GM12878 (cell line): ENCODE measurements at regions of chr1 and their contacts with region 1.

Region 1: DNA sequence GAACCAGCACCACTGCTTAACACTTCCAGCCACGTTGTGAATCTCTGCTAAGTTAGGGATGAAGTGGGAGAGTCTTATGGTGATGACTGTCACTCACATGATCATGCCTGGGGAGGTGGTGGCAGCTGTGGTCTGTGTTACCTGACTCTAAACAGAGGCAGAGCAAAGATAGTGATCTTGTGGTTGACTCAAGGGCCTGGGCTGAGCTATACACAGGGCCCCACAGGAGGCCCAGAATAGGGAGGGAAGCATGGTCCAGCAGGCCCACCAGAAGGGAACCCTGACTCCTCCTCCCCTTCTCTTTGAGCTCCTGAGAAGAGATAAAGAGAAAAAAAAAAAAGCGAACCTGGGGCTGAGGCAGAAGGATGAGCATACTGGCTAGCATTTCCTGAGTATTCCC is 55.0 kb downstream of the PLXNA2 start:
- DNase-seq: peak; percentile 46
- ATAC-seq: no peak
- H3K4me3 ChIP-seq: no peak overlapping the region
- H3K27ac ChIP-seq: peak overlapping the region; percentile 92
- H3K4me1 ChIP-seq: peaks cover 44% of the 10 kb centered on the region
- H3K27me3 ChIP-seq: no peaks in the 10 kb centered on the region
- CTCF ChIP-seq: no peak
- EP300 ChIP-seq: no peak
- POLR2A ChIP-seq: no peak
- RAD21 ChIP-seq: no peak

Region 2: GRCh38 chr1:207654320-207654719 is 534.9 kb before region 1 on chr1:
- CTCF ChIA-PET with region 1: no interaction called
- POLR2A ChIA-PET with region 1: no interaction called
- RAD21 ChIA-PET with region 1: no interaction called
- SMC1A ChIA-PET with region 1: no interaction called
- in situ Hi-C with region 1: no loop called
- intact Hi-C with region 1: no loop called
- DNase-seq: no peak
- ATAC-seq: no peak
- H3K4me3 ChIP-seq: no peak overlapping the region
- H3K27ac ChIP-seq: no peak overlapping the region
- H3K4me1 ChIP-seq: no peaks in the 10 kb centered on the region
- H3K27me3 ChIP-seq: no peaks in the 10 kb centered on the region
- CTCF ChIP-seq: no peak
- EP300 ChIP-seq: no peak
- POLR2A ChIP-seq: no peak
- RAD21 ChIP-seq: no peak

Region 3: DNA sequence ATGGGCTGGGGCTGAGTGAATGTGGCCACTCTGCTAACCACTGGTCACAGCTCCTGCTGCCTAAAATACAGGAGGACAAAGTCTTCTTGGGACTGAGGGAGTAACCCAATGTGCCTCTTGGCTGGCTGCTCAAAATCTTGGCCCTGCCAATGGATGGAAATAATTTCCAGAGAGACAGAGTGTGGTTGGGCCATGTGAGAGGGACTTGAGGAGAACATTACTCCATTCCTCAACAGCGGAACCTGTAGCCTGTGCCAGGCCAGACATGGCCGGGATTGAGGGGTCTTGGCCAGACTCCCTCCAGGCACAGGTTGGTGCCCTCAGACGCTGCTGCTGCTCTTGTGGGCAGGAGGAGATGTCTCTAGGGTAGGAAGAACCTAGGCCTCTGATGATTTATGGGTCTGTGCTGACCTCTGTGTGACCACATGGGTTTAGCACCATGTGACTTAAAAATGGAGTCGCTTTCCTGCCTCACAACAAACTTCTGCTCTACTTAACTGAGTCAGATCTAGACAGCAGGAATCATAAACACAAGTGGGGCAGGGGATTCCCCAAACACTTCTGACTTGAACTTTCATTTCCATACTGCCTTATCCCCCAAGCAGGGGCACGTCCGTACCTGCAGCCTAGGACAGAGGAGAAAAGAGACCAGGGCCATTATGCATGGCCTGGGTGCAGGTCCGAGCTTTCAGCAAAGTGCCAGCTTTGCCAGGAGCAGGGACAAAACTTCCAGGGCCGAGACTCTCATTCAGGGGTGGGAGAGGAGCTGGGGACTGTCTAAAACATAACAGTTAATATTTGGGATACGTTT is 357.5 kb before region 1 on chr1:
- CTCF ChIA-PET with region 1: no interaction called
- POLR2A ChIA-PET with region 1: no interaction called
- RAD21 ChIA-PET with region 1: no interaction called
- SMC1A ChIA-PET with region 1: no interaction called
- in situ Hi-C with region 1: no loop called
- intact Hi-C with region 1: no loop called
- DNase-seq: peak; percentile 94
- ATAC-seq: peak; percentile 90
- H3K4me3 ChIP-seq: peak overlapping the region; percentile 50; the same call in 1 of the 2 replicates
- H3K27ac ChIP-seq: peak overlapping the region; percentile 80
- H3K4me1 ChIP-seq: peaks cover 44% of the 10 kb centered on the region
- H3K27me3 ChIP-seq: no peaks in the 10 kb centered on the region
- CTCF ChIP-seq: no peak
- EP300 ChIP-seq: peak; percentile 86 to 87
- POLR2A ChIP-seq: peak; percentile 57
- RAD21 ChIP-seq: no peak

Region 4: DNA sequence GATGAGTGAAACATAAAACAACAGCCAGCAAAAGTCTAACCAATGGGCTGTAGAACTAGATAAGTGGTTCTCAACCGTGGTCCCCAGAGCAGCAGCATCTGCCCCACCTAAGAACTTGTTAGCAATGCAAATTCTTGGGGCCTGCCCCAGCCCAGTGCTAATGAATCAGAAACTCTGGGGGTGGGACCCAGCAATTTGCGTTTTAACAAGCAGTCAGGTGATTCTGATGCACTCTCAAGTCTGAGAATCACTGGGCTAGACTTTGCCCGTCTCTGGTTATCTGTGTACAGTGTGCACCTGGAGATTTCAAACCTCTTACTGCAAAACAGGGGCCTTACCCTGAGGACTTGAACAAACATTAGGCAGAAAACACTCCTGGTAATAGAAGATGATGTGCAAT is 11.5 kb before region 1 on chr1:
- CTCF ChIA-PET with region 1: interaction called, 18 read pairs
- POLR2A ChIA-PET with region 1: interaction called, 17 read pairs
- RAD21 ChIA-PET with region 1: interaction called, 40 read pairs
- SMC1A ChIA-PET with region 1: interaction called, 16 read pairs
- in situ Hi-C with region 1: no loop called
- intact Hi-C with region 1: no loop called
- DNase-seq: no peak
- ATAC-seq: peak; percentile 68
- H3K4me3 ChIP-seq: no peak overlapping the region
- H3K27ac ChIP-seq: no peak overlapping the region
- H3K4me1 ChIP-seq: peaks cover 2% of the 10 kb centered on the region; the same call in 1 of the 2 replicates
- H3K27me3 ChIP-seq: no peaks in the 10 kb centered on the region; a peak in 1 of 4 replicates
- CTCF ChIP-seq: no peak
- EP300 ChIP-seq: no peak
- POLR2A ChIP-seq: no peak
- RAD21 ChIP-seq: no peak

Region 5: DNA sequence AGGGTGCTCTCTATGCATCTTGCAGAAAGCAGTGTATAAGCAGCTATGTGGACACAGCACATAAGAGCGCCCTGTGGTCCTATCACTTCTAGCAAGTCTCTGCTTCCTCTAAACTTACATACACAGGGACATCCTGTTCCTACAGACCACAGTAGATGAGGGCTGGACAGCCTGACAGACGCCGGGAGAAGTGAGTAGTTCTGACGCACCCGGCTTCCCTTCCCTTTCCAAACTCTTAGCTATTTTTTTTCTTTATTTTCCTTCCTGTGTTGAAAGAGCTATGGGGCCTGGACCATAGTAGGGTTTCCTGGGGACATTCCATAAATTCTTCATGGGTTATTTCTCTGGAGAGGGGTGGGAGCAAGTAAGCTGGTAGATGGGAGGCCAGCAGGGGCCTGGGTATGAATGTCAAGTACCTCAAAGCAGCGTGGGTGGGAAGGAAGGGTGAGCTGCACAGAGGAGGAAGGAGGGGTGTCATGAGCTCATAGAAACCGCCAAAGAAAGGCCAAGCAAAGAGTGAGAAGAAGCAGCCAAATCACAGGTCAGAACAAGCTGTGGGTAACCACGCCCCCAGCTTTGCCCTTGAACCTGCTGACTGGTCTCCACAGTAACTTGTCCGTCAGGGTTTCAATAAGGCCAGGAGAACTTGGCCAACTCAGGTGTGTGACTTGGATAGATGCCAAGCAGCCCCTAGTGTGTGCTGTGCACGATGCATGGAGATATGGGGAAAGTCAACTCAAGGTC is 18.4 kb after region 1 on chr1:
- CTCF ChIA-PET with region 1: interaction called, 37 read pairs
- POLR2A ChIA-PET with region 1: interaction called, 9 read pairs
- RAD21 ChIA-PET with region 1: interaction called, 15 read pairs
- SMC1A ChIA-PET with region 1: interaction called, 19 read pairs
- in situ Hi-C with region 1: no loop called
- intact Hi-C with region 1: no loop called
- DNase-seq: no peak
- ATAC-seq: no peak
- H3K4me3 ChIP-seq: no peak overlapping the region
- H3K27ac ChIP-seq: no peak overlapping the region
- H3K4me1 ChIP-seq: no peaks in the 10 kb centered on the region
- H3K27me3 ChIP-seq: no peaks in the 10 kb centered on the region; a peak in 1 of 4 replicates
- CTCF ChIP-seq: no peak
- EP300 ChIP-seq: no peak
- POLR2A ChIP-seq: no peak
- RAD21 ChIP-seq: no peak

Region 6: GRCh38 chr1:208238710-208239472 is 49.7 kb after region 1 on chr1:
- CTCF ChIA-PET with region 1: interaction called, 23 read pairs
- POLR2A ChIA-PET with region 1: interaction called, 3 read pairs
- RAD21 ChIA-PET with region 1: interaction called, 25 read pairs
- SMC1A ChIA-PET with region 1: interaction called, 8 read pairs
- in situ Hi-C with region 1: no loop called
- intact Hi-C with region 1: no loop called
- DNase-seq: no peak
- ATAC-seq: peak; percentile 78
- H3K4me3 ChIP-seq: no peak overlapping the region
- H3K27ac ChIP-seq: no peak overlapping the region
- H3K4me1 ChIP-seq: peaks cover 17% of the 10 kb centered on the region
- H3K27me3 ChIP-seq: peaks cover 8 to 17% of the 10 kb centered on the region in 2 experiments
- CTCF ChIP-seq: peak; percentile 42 to 71 (median 66)
- EP300 ChIP-seq: no peak
- POLR2A ChIP-seq: no peak
- RAD21 ChIP-seq: peak; percentile 52

Region 7: GRCh38 chr1:208245185-208245705 is 56.1 kb after region 1 on chr1:
- CTCF ChIA-PET with region 1: interaction called, 23 read pairs
- POLR2A ChIA-PET with region 1: no interaction called
- RAD21 ChIA-PET with region 1: interaction called, 25 read pairs
- SMC1A ChIA-PET with region 1: interaction called, 4 read pairs
- in situ Hi-C with region 1: no loop called
- intact Hi-C with region 1: no loop called
- DNase-seq: peak; percentile 26
- ATAC-seq: peak; percentile 92
- H3K4me3 ChIP-seq: no peak overlapping the region
- H3K27ac ChIP-seq: no peak overlapping the region
- H3K4me1 ChIP-seq: peaks cover 8% of the 10 kb centered on the region
- H3K27me3 ChIP-seq: peaks cover 10 to 15% of the 10 kb centered on the region in 2 experiments
- CTCF ChIP-seq: peak; percentile 74 to 79 (median 74)
- EP300 ChIP-seq: no peak
- POLR2A ChIP-seq: no peak
- RAD21 ChIP-seq: peak; percentile 75

Region 8: DNA sequence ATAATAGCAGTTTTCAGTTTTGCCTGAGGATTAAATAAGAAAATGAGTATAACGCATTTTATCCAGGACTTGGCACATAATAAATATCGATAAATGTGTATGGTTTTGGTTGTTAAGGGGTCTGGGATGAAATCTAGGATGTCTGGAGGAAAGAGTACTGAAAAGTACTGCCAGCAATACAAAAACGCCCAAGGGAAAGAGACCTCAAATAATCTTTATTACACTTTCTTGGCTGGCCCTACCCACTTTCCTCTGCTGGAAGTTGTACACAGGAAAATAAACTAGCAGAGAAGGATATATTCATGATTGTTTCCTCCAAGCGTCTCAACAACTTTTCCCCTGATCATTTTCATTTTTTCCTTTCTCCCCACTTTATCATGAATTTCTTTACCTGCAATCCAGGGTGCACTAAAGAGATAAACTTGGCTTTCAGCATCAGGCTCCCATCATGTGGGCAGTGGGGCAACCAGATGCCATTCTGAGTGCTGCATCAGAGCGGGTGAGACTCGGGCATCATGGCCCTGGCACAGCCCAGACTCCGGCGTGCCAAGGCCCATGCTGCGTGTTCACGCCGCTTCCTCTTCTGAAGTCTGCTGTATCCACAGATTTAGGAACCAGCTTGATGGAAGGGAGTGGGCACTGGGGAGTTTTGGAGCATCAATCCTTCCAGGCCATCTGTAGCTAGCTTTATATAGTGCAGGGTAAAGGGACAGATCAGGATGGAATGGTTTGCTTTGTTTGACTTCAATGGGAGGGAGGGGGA is 90.8 kb after region 1 on chr1:
- CTCF ChIA-PET with region 1: no interaction called
- POLR2A ChIA-PET with region 1: no interaction called
- RAD21 ChIA-PET with region 1: no interaction called
- SMC1A ChIA-PET with region 1: no interaction called
- in situ Hi-C with region 1: no loop called
- intact Hi-C with region 1: no loop called
- DNase-seq: no peak
- ATAC-seq: no peak
- H3K4me3 ChIP-seq: no peak overlapping the region
- H3K27ac ChIP-seq: no peak overlapping the region
- H3K4me1 ChIP-seq: no peaks in the 10 kb centered on the region
- H3K27me3 ChIP-seq: 0 out of 4 replicates have a peak, but pooled peaks cover 0 to 2% of the 10 kb centered on the region in 2 experiments
- CTCF ChIP-seq: no peak
- EP300 ChIP-seq: no peak
- POLR2A ChIP-seq: no peak
- RAD21 ChIP-seq: no peak